GM18951 (cell line): ENCODE measurements at regions of chr10 and their contacts with region 1.

Region 1: DNA sequence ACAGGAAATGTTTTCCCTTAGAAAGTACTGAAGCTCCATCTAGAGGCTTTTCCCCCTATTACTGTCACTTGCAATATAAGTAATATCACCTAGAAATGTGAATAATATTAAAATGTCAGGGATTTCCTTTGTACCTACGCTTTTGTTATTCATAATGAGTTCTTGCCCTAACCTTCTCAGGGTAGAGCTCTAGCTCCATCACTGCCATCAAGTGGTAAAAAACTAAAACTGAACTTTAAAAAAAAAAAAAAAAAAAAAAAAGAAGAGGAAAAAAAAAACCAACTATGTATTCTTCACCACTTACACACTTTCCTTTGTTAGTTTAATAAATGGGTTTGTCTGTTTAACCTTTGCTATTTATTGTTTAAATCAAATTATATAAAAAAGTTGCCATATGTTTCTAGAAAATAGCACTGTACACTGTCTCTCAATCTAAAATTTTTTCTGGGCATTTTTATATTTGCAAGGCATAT is 49.9 kb downstream of the DNAJC1 start:
- POLR2A ChIP-seq: no peak

Region 2: DNA sequence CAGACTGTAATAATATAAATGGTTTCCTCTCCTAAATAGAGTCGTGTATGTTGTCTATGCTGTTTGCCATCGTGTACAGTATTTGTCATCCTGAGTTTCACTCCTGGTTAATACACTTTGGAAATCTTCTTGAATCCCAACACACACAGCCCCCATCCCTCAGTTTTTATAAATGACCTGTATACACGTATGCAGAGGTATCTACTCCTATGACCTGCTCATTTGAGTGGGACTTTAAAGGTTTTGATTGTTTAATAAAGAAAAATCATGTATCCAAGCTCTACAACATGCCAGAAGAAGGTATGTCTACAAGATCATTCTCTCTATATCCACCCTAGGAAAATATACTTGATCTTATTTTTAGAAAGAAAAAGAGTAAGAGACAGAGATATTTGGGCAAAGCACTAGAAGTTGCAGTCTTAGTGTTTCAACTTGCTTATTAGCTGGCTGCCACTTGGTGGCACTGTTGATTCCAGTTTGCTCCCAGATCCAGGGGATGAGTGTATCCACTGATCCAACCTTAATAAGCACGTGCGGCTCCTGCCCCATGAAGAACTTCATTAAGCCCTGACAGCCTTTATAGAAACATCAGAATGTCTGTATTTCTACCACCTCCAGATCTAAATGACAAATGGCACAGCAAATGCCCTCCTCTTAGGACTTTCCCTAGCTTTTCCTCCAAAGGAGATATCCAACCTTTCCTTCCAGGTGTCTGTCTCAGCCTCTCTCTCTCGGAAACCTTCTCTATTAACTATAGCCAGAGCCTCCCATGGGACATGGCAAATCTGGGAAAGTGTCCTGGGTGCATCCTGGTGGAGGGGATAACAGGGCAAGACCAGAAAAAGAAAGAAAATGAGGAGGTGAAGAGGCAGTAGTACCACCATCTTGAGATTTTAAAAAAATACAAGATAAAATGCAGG is 875.0 kb before region 1 on chr10:
- in situ Hi-C with region 1: loop called (anchors 25 kb)
- POLR2A ChIP-seq: no peak

Region 3: GRCh38 chr10:21495752-21496342 is 457.8 kb before region 1 on chr10:
- in situ Hi-C with region 1: loop called (anchors 25 kb)
- POLR2A ChIP-seq: peak; percentile 43